ENCODE measurements at regions of chr20 and their contacts with region 1.

Region 1: DNA sequence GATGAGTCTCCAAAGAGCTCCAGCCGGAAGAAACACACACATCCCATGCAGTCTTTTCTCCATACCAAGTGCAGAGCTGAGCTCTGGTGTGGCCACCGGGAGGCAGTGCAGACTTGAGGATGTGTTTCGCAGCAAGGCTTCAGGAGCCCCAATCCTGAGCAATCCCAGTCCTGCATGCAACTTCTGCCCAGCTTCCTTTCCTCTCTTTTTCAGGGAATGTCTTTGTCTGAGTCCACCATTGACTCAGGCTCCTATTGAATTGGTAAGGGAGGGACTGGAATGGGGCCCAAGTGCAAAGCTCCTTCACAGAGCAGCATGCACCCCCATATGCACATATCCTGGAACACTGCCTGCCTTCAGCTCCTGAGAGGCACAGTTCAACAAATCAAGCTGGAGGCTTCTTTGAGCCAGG is 50.5 kb upstream of the ASIP start:
- ATAC-seq: peak; percentile 84 to 100 (median 98)
- H3K4me3 ChIP-seq: no peak overlapping the region
- H3K27ac ChIP-seq: no peak overlapping the region
- H3K4me1 ChIP-seq: no peaks in the 10 kb centered on the region

Region 2: GRCh38 chr20:34282041-34282440 is 91.4 kb after region 1 on chr20:
- in situ Hi-C with region 1: loop called in 1 of 9 experiments (anchors 25 kb)
- ATAC-seq: no peak
- H3K4me3 ChIP-seq: no peak overlapping the region
- H3K27ac ChIP-seq: no peak overlapping the region
- H3K4me1 ChIP-seq: no peaks in the 10 kb centered on the region